ENCODE measurements at regions of chr15 and their contacts with region 1.

Region 1: DNA sequence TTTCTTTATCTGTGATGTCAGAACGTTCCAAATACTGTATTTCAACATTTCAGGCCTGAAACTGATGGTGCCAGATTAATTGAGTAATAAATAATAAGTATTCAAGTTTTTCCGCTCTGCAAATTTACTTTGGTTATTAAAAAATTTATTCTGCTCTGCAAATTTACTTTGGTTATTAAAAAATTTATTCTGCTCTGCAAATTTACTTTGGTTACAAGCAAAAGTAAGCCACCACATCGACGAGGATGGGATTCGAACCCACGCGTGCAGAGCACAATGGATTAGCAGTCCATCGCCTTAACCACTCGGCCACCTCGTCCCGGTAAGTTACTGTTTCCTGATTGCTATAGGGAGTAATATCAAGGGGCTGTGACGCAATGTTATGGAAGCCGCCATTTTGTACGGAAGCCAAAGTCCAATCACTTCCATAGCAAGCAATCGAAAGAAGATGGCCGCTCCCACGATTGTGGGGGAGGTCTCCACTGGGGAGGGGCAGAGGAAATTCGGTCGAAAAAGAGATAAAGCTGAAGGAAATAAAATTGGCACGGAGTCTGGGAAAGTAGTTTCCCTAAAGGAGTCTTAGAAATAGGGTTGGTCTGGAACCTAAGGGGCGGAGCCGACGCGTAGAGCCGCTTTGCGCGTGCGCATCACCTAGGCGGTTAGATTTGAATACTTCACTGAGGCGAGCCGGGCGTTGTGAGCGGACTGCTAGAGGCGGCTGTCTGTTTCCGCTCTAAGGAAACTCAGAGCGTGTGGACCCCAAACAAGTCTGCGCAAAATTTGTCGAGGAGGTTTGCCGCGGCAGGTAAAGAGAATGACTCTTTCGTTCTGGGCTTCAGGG is at the start of gene KNL1:
- DNase-seq: peak; percentile 93
- H3K4me3 ChIP-seq: peak within 1 kb of the TSS; percentile 91
- H3K27me3 ChIP-seq: no peaks in the 10 kb centered on the region; the same call in 1 of the 2 replicates
- CTCF ChIP-seq: no peak
- polyA plus RNA-seq, gene KNL1: 3.9 and 8.5 TPM in 2 replicates

Region 2: DNA sequence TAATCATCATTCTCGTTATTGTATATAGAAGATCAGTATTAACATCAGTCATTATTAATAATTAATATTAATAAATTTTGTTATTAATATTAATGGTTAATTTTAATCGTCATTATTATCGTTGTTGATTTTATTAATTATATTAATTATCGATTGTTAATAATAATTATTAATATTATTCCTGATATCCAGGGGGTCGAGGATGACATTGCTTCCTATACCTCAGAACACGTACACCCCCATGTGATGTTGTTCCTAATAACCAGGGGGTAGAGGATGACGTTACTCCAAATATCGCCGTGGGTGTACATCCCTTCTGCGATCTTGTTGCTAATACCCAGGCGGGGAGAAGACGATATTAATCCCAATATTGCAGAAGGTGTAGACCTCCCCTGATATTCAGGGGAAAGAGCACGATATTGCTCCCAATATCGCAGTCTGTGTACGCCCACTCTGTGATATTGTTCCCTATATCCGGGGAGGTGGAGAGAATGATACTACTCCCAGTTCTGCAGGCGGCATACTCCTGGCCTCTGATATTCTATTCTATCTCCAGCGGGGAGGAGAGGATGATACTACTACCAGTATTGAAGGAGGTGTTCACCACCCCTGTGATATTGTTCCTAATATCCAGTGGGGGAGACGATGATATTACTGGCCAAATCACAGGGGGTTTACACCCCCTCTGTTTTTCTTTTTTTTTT is 462.9 kb before region 1 on chr15:
- CTCF ChIA-PET with region 1: no interaction called
- POLR2A ChIA-PET with region 1: no interaction called
- DNase-seq: no peak
- H3K4me3 ChIP-seq: no peak overlapping the region
- H3K27me3 ChIP-seq: no peaks in the 10 kb centered on the region; the same call in 1 of the 2 replicates
- CTCF ChIP-seq: no peak

Region 3: GRCh38 chr15:40569139-40569953 is 24.5 kb before region 1 on chr15 and contains the start of gene RPUSD2:
- CTCF ChIA-PET with region 1: interaction called, 13 read pairs
- POLR2A ChIA-PET with region 1: no interaction called
- DNase-seq: peak; percentile 37
- H3K4me3 ChIP-seq: peak within 1 kb of the TSS; percentile 76
- H3K27me3 ChIP-seq: no peaks in the 10 kb centered on the region
- CTCF ChIP-seq: no peak
- polyA plus RNA-seq, gene RPUSD2: 7.5 and 9.3 TPM in 2 replicates

Region 4: DNA sequence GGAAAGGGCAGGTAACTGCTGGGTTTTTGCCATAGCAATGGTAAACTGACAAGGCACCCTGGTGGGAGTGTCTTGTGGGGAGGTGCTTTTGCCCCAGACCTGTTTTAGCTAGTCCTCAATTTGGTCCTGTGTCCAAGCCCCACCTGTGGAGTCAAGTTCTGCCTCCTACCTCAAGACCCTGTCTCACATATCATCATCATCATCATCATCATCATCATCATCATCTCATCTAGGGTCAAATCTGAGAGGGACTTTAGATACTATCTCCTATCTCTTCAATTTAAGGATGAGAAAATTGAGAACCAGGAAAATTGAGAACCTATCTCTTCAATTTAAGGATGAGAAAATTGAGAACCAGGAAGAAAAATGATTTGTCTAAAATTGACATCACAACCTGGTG is 10.1 kb after region 1 on chr15:
- CTCF ChIA-PET with region 1: interaction called, 12 read pairs
- POLR2A ChIA-PET with region 1: no interaction called
- DNase-seq: no peak
- H3K4me3 ChIP-seq: no peak overlapping the region
- H3K27me3 ChIP-seq: no peaks in the 10 kb centered on the region
- CTCF ChIP-seq: no peak